GM12878 (cell line): ENCODE measurements at regions of chr6 and their contacts with region 1.

Region 1: DNA sequence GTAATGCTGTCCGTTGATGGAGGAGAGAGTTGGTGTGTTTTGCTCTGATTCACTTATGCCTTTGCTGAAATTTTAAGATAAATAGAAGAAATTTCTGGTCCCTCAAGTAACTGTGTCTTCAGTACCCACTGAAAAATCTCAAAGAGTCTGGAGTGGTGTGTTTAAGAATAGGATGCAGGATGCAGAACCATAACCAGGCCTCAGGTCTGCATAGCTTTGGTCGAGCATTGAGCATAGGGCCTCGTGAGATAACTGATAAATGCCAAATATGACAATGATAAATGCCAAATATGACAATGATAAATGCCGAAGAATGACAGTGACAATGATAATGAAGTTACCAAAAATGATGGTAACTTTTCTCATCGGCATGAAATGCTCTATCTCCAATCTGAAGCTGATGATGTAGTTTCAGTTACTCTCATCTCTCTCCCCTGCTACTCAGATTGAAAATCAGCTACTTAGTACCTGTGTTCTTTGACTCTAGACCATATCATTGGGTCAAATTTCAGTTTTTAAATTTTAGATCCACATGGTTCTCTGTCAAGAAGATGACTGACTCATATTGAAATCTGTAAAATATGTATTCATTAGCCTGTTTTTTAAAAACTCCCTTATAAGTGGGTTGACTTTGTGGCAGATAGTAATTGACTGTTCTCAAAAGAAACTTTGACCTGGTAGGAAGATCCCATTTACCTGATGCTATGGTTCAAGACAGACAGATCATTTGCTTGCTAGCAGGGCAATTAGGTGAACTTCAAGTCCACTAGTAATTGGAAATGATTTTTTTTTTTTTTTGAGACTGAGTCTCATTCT is 96.6 kb downstream of the SLC16A10 start:
- DNase-seq: no peak
- ATAC-seq: peak; percentile 94
- H3K4me3 ChIP-seq: no peak overlapping the region
- H3K27ac ChIP-seq: no peak overlapping the region
- H3K4me1 ChIP-seq: no peaks in the 10 kb centered on the region; the same call in 1 of the 2 replicates
- H3K27me3 ChIP-seq: no peaks in the 10 kb centered on the region
- CTCF ChIP-seq: no peak
- EP300 ChIP-seq: no peak
- POLR2A ChIP-seq: no peak
- RAD21 ChIP-seq: no peak

Region 2: DNA sequence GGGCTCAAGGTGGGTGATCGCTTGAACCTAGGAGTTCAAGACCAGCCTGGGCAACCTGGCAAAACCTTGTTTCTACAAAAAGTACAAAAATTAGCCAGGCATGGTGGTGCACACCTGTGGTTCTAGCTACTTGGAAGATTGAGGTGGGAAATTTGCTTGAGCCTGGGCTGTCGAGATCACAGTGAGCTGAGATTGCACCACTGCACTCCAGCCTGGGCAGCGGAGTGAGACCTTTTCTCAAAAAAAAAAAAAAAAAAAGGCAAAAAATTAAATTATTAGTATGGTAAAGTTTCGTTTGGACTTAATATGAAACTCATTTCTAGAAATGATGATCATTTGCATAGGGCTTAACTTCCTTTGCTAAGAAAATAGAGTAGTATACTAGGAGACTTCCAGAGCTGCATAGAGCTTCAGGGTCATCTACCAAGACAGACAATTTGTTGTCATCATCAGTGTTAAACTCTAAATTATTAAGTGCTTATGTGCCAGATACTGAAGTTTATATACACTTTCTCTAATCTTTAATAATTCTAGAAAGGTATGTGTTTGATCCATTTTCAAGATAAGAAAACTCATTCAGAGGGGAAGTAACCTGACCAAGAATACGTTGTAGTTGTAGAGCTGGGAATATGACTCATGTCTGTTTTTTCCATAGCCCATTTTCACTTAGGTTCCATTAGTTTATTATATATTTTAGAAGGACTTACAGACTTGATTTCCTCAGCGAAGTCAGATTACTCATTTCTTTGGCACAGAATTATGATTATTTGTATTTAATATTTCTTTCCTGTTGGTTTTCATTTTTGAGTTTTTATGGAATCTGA is 12.1 kb before region 1 on chr6:
- CTCF ChIA-PET with region 1: interaction called, 5 read pairs
- POLR2A ChIA-PET with region 1: no interaction called
- RAD21 ChIA-PET with region 1: no interaction called
- SMC1A ChIA-PET with region 1: interaction called, 10 read pairs
- in situ Hi-C with region 1: no loop called
- intact Hi-C with region 1: no loop called
- DNase-seq: no peak
- ATAC-seq: peak; percentile 82
- H3K4me3 ChIP-seq: no peak overlapping the region
- H3K27ac ChIP-seq: no peak overlapping the region
- H3K4me1 ChIP-seq: peaks cover 23% of the 10 kb centered on the region
- H3K27me3 ChIP-seq: no peaks in the 10 kb centered on the region
- CTCF ChIP-seq: no peak
- EP300 ChIP-seq: no peak
- POLR2A ChIP-seq: no peak
- RAD21 ChIP-seq: no peak

Region 3: DNA sequence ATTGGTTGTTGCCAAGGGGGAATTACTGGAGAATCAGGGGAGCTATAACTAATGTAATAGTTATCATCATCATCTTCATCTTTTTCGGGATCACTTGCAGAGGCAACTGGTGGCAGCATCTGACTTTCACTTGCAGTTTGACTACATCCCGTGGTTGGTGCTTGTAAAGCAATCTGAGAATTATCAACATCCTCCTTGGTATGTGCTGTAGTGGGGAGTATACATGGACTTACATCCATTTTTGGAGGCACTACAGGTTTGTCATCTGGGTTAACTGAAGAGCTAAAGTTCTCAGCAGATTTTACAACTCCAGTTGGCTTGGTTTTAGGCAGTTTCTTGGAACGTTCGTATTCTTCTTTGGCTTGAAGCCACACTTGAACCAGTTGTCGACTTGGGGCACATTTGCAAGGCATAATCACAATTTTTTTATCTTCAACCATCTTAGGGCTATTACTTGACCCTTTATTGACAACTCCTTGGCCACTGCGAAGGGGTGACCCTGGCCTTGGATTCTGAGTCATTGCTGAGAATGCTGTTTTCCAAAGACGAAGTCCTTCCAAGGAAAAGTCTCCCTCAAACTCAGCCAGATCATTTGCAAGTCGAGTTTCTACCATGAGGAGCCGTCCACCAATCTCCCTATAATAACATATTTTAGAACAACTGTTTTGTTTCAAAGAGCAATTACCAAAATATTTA is 183.6 kb after region 1 on chr6:
- CTCF ChIA-PET with region 1: no interaction called
- POLR2A ChIA-PET with region 1: no interaction called
- RAD21 ChIA-PET with region 1: no interaction called
- SMC1A ChIA-PET with region 1: no interaction called
- in situ Hi-C with region 1: no loop called
- intact Hi-C with region 1: no loop called
- DNase-seq: peak; percentile 32
- ATAC-seq: peak; percentile 83
- H3K4me3 ChIP-seq: no peak overlapping the region
- H3K27ac ChIP-seq: no peak overlapping the region
- H3K4me1 ChIP-seq: peaks cover 12% of the 10 kb centered on the region
- H3K27me3 ChIP-seq: no peaks in the 10 kb centered on the region
- CTCF ChIP-seq: no peak
- EP300 ChIP-seq: no peak
- POLR2A ChIP-seq: no peak
- RAD21 ChIP-seq: no peak

Region 4: GRCh38 chr6:111406200-111406721 is 222.4 kb after region 1 on chr6:
- CTCF ChIA-PET with region 1: no interaction called
- POLR2A ChIA-PET with region 1: no interaction called
- RAD21 ChIA-PET with region 1: no interaction called
- SMC1A ChIA-PET with region 1: no interaction called
- in situ Hi-C with region 1: no loop called
- intact Hi-C with region 1: no loop called
- DNase-seq: peak; percentile 96
- ATAC-seq: peak; percentile 94
- H3K4me3 ChIP-seq: no peak overlapping the region
- H3K27ac ChIP-seq: peak overlapping the region; percentile 59
- H3K4me1 ChIP-seq: peaks cover 28% of the 10 kb centered on the region
- H3K27me3 ChIP-seq: no peaks in the 10 kb centered on the region
- CTCF ChIP-seq: no peak
- EP300 ChIP-seq: peak; percentile 98 to 100; a peak in 3 of 4 replicates
- POLR2A ChIP-seq: no peak
- RAD21 ChIP-seq: peak; percentile 37; the same call in 1 of the 2 replicates